Transverse colon (tissue), 4 donors: ENCODE measurements at regions of chr17 and their contacts with region 1.

Region 1: GRCh38 chr17:61619493-61619892 is 28.5 kb upstream of the NACA2 start:
- DNase-seq: no peak
- H3K4me3 ChIP-seq: no peak overlapping the region
- H3K27ac ChIP-seq: no peak overlapping the region
- H3K4me1 ChIP-seq: no peaks in the 10 kb centered on the region
- H3K27me3 ChIP-seq: peaks cover 1% of the 10 kb centered on the region
- CTCF ChIP-seq: no peak
- EP300 ChIP-seq: no peak
- POLR2A ChIP-seq: no peak

Region 2: DNA sequence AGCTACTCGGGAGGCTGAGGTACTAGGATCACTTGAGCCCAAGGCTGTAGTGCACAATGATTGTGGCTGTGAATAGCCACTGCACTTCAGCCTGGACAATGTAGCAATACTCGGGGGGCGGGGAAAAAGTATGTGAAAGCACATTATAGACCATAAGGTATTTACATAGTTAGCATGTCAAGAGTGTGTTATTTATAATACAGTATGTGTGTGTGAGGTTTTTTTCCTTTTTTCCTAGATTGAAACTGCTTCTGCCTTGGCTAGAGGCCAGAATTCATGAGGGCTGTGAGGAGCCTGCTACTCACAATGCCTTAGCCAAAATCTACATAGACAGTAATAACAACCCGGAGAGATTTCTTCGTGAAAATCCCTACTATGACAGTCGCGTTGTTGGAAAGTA is 1942.8 kb before region 1 on chr17:
- in situ Hi-C with region 1: no loop called
- intact Hi-C with region 1: loop called (anchors 10 kb)
- DNase-seq: no peak
- H3K4me3 ChIP-seq: no peak overlapping the region
- H3K27ac ChIP-seq: no peak overlapping the region
- H3K4me1 ChIP-seq: peaks cover 3 to 32% (median 13%) of the 10 kb centered on the region in 4 donors
- H3K27me3 ChIP-seq: no peaks in the 10 kb centered on the region
- CTCF ChIP-seq: no peak
- EP300 ChIP-seq: no peak
- POLR2A ChIP-seq: no peak

Region 3: DNA sequence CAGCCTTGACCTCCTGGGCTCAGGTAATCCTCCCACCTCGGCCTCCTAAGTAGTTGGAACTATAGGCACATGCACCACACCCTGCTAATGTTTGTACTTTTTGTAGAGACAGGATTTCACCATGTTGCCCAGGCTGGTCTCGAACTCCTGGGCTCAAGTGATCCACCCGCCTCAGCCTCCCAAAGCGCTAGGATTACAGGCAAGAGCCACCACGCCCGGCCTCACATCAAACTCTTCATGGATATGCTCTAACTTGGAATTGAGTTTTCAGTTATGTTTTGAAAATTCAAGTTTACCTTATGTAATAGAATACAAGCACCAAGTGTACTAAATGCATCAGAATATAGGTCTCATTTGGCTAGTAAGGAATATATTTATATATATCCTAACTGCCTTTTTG is 124.3 kb after region 1 on chr17:
- in situ Hi-C with region 1: no loop called
- intact Hi-C with region 1: no loop called
- DNase-seq: no peak
- H3K4me3 ChIP-seq: no peak overlapping the region
- H3K27ac ChIP-seq: no peak overlapping the region
- H3K4me1 ChIP-seq: no peaks in the 10 kb centered on the region
- H3K27me3 ChIP-seq: no peaks in the 10 kb centered on the region
- CTCF ChIP-seq: no peak
- EP300 ChIP-seq: no peak
- POLR2A ChIP-seq: no peak

Region 4: DNA sequence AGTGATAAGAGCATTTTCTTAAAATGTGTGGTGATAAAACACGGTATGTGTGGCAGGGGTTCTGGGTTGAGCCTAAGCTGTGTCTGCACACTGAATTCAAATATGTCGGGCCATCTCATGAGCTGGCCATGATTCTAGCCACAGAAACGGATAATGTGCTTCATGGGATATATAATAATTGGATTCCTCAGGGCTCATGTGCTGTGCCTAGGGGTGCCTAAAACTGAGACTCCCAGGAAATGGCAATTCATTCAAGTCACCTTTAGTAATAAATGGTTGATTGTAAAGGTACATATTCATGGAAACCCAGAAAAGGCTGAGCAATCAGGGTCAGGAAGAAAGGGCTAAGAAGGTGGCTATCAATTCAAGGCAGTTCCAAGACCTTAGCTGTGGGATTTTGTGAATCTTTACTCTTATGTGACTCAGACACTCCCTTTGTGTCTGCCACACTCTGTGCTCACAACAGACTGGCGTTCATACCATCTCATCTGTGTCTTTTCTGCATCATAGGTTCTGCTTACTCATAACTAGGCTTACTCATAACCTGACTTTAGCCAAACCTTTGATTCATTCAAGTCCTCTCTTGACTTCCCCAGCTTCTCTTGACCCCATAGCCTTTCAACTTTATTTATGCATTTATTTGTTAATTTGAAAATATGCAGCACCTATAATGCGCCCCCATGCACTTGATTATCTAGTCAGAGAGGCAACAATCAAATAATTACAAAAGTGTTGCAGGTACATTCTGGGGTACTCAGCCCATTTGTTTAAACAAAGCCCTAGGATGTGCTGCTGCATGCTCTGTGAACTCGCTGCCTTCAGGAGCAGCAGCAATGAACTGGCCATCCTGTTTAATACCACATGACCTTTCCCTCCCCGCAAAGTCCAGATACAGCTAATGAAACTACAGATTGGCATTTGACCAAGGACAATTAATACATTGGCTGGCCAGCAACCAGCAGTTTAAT is 474.0 kb after region 1 on chr17:
- in situ Hi-C with region 1: no loop called
- intact Hi-C with region 1: loop called (anchors 10 kb)
- DNase-seq: no peak
- H3K4me3 ChIP-seq: no peak overlapping the region
- H3K27ac ChIP-seq: no peak overlapping the region
- H3K4me1 ChIP-seq: peaks cover 0 to 3% (median 2%) of the 10 kb centered on the region in 4 donors
- H3K27me3 ChIP-seq: no peaks in the 10 kb centered on the region
- CTCF ChIP-seq: no peak
- EP300 ChIP-seq: no peak
- POLR2A ChIP-seq: no peak